ENCODE measurements at regions of chr6 and their contacts with region 1.

Region 1: DNA sequence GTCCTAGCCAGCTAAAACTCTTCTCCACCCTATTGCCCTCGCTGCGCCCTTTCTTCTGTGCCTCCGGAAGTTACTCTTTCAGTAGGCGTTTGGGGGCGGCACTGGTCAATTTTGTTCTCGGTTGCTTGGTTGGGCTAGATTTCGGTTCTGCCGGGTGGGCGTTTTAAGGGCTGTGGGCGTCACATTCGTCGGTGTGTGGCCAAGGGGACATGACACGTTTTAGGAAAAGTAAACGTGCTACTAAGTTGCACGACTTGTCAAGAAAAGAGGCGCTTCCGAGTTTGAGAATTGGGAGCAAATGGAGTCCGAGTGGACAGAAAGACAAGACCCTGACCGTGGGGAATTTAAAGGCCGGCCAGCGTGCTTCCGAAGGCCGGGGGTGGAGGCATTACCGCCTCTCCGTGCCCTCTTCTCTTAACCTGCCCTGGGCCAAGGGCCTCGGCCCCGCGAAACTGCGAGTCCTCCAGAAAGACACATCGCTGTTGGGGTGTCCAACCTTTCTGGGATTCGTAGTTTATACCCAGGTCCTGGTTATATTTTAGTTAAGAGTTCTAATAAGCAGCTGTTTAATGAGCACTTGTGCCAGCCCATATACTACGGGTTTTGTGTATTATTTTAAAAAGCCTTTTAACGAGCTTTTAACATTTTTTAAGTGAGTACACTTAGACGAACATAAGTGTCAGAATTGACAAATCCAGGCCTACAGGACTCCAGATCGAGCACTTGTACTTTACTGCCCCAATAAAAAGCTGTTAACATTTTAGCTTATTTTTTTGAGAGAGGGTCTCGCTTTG is 661 bp upstream of the BAG6 start:
- DNase-seq: no peak
- ATAC-seq: peak; percentile 84
- H3K4me3 ChIP-seq: peak overlapping the region; percentile 91
- H3K27ac ChIP-seq: peak overlapping the region; percentile 99
- H3K4me1 ChIP-seq: peaks cover 8% of the 10 kb centered on the region; the same call in 1 of the 2 replicates
- H3K27me3 ChIP-seq: no peaks in the 10 kb centered on the region
- CTCF ChIP-seq: peak in 1 of 3 experiments; percentile 29; a peak in 2 of 6 replicates
- EP300 ChIP-seq: no peak
- POLR2A ChIP-seq: no peak
- RAD21 ChIP-seq: no peak

Region 2: DNA sequence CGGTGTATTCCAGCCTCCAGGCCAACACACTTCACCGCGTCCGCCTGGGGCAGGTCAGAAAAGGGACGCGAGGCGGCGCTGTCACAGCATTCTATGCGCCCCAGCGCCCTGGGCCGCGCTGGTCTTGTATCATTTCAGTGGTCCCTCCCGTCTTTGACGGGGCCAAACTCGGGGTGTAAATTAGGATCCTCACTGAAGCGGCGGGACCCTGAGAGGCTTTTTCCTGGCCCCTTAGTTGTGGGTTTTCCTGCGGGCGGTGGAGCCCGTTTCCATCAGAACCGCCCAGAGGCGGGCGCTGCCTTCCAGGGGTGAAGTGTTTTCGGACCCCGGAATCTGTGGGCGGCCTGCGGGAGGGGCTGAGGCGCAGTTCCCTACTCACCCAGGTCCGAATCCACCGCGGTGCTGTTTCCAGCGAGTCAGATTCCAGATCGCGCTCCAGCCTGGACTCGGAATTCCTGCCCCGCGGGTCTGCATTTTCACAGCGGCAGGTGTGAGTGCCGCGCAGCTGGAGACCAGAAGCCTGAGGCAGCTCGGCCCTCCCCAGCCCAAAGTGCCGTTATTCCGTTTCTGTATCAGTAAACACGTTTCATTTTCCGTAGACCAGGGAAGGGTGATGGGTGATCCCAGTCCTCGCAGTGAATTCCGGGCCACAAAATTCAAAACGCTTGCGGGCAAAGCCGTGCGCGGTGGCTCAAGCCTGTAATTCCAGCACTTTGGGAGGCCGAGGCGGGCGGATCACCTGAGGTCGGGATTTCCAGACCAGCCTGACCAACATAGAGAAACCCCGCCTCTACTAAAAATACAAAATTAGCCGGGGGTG is 159.0 kb before region 1 on chr6:
- CTCF ChIA-PET with region 1: interaction called, 3 read pairs
- POLR2A ChIA-PET with region 1: interaction called, 4 read pairs
- RAD21 ChIA-PET with region 1: interaction called, 3 read pairs
- SMC1A ChIA-PET with region 1: interaction called, 3 read pairs
- in situ Hi-C with region 1: no loop called
- intact Hi-C with region 1: loop called (anchors 2 kb)
- DNase-seq: peak; percentile 34
- ATAC-seq: peak; percentile 73
- H3K4me3 ChIP-seq: peak overlapping the region; percentile 76
- H3K27ac ChIP-seq: peak overlapping the region; percentile 65
- H3K4me1 ChIP-seq: 0 out of 2 replicates have a peak, but pooled peaks cover 2% of the 10 kb centered on the region
- H3K27me3 ChIP-seq: no peaks in the 10 kb centered on the region
- CTCF ChIP-seq: peak; percentile 72 to 94 (median 85)
- EP300 ChIP-seq: no peak
- POLR2A ChIP-seq: 0 out of 2 replicates have a peak, but pooled peaks have one; percentile 23
- RAD21 ChIP-seq: peak; percentile 72

Region 3: DNA sequence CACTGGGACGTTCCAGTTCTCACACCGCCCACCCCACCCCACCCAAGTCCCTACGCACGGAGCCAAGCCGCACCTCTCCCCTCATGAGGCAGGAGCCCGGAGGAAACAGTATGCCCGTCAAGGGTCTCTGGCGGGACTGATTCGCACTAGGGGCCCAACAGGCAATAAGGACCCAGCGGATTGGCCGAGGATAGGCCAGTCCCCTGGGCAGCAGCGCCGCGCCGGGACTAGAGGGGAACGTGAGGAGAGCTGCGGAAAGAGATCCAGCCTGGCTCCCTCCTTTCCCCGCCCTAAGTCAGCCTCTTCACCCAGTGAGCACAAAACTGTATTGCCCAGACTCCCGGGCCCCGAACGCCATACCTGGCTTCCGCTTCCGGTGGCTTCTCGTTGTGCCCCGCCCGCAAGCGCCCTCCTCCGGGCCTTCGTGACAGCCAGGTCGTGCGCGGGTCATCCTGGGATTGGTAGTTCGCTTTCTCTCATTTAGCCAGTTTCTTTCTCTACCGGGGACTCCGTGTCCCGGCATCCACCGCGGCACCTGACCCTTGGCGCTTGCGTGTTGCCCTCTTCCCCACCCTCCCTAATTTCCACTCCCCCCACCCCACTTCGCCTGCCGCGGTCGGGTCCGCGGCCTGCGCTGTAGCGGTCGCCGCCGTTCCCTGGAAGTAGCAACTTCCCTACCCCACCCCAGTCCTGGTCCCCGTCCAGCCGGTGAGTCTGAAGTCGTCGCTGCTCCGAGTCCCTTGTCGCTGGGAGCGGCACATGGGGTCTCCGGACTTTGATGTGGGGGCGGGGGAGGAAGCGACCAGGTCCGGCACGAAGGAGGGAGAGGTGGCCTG is 12.6 kb after region 1 on chr6 and contains the start of gene CSNK2B:
- CTCF ChIA-PET with region 1: interaction called, 19 read pairs
- POLR2A ChIA-PET with region 1: interaction called, 107 read pairs
- RAD21 ChIA-PET with region 1: interaction called, 8 read pairs
- SMC1A ChIA-PET with region 1: interaction called, 31 read pairs
- in situ Hi-C with region 1: no loop called
- intact Hi-C with region 1: no loop called
- DNase-seq: peak; percentile 91
- ATAC-seq: peak; percentile 89
- H3K4me3 ChIP-seq: peak within 1 kb of the TSS; percentile 93
- H3K27ac ChIP-seq: peak within 1 kb of the TSS; percentile 94
- H3K4me1 ChIP-seq: peaks cover 37% of the 10 kb centered on the region
- H3K27me3 ChIP-seq: no peaks in the 10 kb centered on the region
- CTCF ChIP-seq: no peak
- EP300 ChIP-seq: no peak
- POLR2A ChIP-seq: peak; percentile 93
- RAD21 ChIP-seq: no peak
- polyA plus RNA-seq, gene CSNK2B: 286 to 361 TPM

Region 4: GRCh38 chr6:31712296-31712695 is 59.2 kb after region 1 on chr6:
- CTCF ChIA-PET with region 1: no interaction called
- POLR2A ChIA-PET with region 1: no interaction called
- RAD21 ChIA-PET with region 1: no interaction called
- SMC1A ChIA-PET with region 1: no interaction called
- in situ Hi-C with region 1: no loop called
- intact Hi-C with region 1: no loop called
- DNase-seq: no peak
- ATAC-seq: peak; percentile 81
- H3K4me3 ChIP-seq: no peak overlapping the region
- H3K27ac ChIP-seq: no peak overlapping the region
- H3K4me1 ChIP-seq: no peaks in the 10 kb centered on the region
- H3K27me3 ChIP-seq: peaks cover 0 to 2% of the 10 kb centered on the region in 2 experiments; a peak in 3 of 4 replicates
- CTCF ChIP-seq: peak; percentile 7 to 10 (median 9); a peak in 2 of 6 replicates
- EP300 ChIP-seq: no peak
- POLR2A ChIP-seq: no peak
- RAD21 ChIP-seq: no peak

Region 5: DNA sequence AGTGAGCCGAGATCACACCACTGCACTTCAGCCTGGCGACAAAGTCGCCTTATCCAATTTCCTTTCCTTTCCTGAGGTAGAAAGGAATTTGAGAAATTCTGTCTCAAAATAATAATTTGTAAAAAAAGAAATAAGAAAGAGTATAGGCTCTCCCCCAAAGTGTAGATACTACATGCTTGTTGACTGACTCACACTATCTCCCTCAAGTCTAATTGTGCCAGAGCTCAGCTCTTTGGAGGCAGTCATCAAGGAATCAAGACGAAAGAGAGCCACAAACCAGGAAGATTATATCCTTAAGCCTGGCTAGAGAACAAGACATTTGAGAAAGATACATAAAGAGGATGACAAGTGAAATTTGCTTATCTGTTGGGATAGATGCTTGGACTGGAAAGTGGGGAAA is 480.7 kb after region 1 on chr6:
- CTCF ChIA-PET with region 1: no interaction called
- POLR2A ChIA-PET with region 1: no interaction called
- RAD21 ChIA-PET with region 1: no interaction called
- SMC1A ChIA-PET with region 1: no interaction called
- in situ Hi-C with region 1: no loop called
- intact Hi-C with region 1: no loop called
- DNase-seq: no peak
- ATAC-seq: no peak
- H3K4me3 ChIP-seq: no peak overlapping the region
- H3K27ac ChIP-seq: no peak overlapping the region
- H3K4me1 ChIP-seq: peaks cover 4% of the 10 kb centered on the region
- H3K27me3 ChIP-seq: no peaks in the 10 kb centered on the region
- CTCF ChIP-seq: no peak
- EP300 ChIP-seq: no peak
- POLR2A ChIP-seq: no peak
- RAD21 ChIP-seq: no peak

Measured in GM12878 (cell line).